Aorta (tissue), 5 donors: ENCODE measurements at regions of chr1 and their contacts with region 1.

Region 1: GRCh38 chr1:92784639-92785500 is at the start of gene EVI5:
- DNase-seq: peak; percentile 97 to 99
- ATAC-seq: peak; percentile 97
- H3K4me3 ChIP-seq: peak within 1 kb of the TSS; percentile 41 to 67
- H3K27ac ChIP-seq: peak within 1 kb of the TSS; percentile 85 to 94
- H3K4me1 ChIP-seq: no peaks in the 10 kb centered on the region
- H3K27me3 ChIP-seq: no peaks in the 10 kb centered on the region
- total RNA-seq, gene EVI5: 47.5 to 54.7 TPM

Region 2: DNA sequence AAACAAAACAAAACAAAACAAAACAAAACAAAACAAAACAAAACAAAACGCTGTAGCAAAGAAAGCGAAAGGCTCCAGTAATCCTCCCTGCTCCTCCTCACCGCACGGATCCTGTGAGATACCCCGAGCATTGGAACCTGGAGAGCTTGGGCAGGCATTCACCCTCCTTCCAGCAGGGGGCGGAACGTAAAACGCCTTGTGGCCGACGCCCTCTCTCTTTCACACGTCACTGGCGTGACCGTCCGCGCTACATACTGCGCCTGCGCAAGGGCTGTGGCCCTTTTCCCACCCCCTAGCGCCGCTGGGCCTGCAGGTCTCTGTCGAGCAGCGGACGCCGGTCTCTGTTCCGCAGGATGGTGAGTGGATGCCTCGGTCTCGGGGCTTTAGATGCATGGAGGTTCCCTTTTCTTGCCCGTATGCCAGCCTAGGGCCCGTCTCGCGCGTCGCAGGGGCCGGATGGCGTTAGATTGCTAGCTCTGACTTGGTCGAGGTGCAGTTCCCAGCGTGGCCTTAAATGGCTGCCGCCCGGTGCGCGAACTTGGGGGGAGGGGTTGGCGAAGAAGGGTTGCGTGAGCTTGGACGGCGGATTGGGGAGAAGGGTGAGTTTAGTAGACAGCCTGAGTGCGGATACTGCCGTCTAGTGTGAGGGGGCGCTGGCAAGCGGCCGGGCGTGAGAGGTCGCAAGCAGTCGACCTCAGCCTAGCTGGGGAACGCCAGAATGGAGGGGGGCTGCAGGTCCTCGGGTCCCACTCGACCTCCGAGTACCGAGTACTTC is 47.1 kb after region 1 on chr1 and contains the start of gene RPL5:
- intact Hi-C with region 1: loop called (anchors 5 kb)
- DNase-seq: peak; percentile 97 to 99
- ATAC-seq: peak; percentile 100
- H3K4me3 ChIP-seq: peak within 1 kb of the TSS; percentile 71 to 94
- H3K27ac ChIP-seq: peak within 1 kb of the TSS; percentile 78 to 83
- H3K4me1 ChIP-seq: peaks cover 0 to 2% of the 10 kb centered on the region in 2 donors
- H3K27me3 ChIP-seq: no peaks in the 10 kb centered on the region
- total RNA-seq, gene RPL5: 778 to 824 TPM

Region 3: GRCh38 chr1:92909321-92909720 is 124.5 kb after region 1 on chr1:
- intact Hi-C with region 1: no loop called
- DNase-seq: no peak
- ATAC-seq: no peak
- H3K4me3 ChIP-seq: no peak overlapping the region
- H3K27ac ChIP-seq: no peak overlapping the region
- H3K4me1 ChIP-seq: peaks cover 0 to 5% of the 10 kb centered on the region in 2 donors
- H3K27me3 ChIP-seq: no peaks in the 10 kb centered on the region